Esophagus muscularis mucosa (tissue), 4 donors: ENCODE measurements at regions of chrX and their contacts with region 1.

Region 1: DNA sequence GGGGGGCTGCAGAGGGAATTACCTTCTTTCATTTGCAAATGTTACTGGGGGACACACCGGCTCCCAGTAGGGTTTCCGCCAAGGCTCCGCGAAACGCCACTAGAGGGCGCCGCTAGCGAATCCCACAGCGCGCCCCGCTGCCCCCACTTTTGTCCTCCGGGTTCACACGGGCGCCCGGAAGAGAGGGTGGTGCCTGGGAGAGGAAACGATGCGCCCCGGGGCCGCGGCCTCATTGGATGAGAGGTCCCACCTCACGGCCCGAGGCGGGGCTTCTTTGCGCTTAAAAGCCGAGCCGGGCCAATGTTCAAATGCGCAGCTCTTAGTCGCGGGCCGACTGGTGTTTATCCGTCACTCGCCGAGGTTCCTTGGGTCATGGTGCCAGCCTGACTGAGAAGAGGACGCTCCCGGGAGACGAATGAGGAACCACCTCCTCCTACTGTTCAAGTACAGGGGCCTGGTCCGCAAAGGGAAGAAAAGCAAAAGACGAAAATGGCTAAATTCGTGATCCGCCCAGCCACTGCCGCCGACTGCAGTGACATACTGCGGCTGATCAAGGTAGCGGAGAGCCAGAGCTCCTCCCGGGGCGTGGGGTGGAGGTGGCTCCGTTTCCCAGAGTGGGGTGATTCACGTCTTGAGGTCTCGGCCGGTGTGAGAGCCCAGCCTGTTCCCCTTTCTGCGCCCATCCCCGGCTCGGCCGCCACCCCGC is at the start of gene SAT1:
- DNase-seq: peak; percentile 97
- H3K4me3 ChIP-seq: peak within 1 kb of the TSS; percentile 64 to 78 (median 68)
- H3K27ac ChIP-seq: peak within 1 kb of the TSS; percentile 89 to 96 (median 94)
- H3K4me1 ChIP-seq: peaks cover 0 to 30% (median 10%) of the 10 kb centered on the region in 4 donors
- H3K27me3 ChIP-seq: no peaks in the 10 kb centered on the region
- CTCF ChIP-seq: peak; percentile 76 to 77 (median 77)
- EP300 ChIP-seq: no peak
- POLR2A ChIP-seq: peak; percentile 96
- total RNA-seq, gene SAT1: 152 to 621 (median 206) TPM

Region 2: GRCh38 chrX:23694606-23695005 is 88.4 kb before region 1 on chrX:
- intact Hi-C with region 1: loop called (anchors 10 kb)
- DNase-seq: no peak
- H3K4me3 ChIP-seq: no peak overlapping the region
- H3K27ac ChIP-seq: no peak overlapping the region
- H3K4me1 ChIP-seq: no peaks in the 10 kb centered on the region
- H3K27me3 ChIP-seq: no peaks in the 10 kb centered on the region
- CTCF ChIP-seq: peak; percentile 21 to 53 (median 48)
- EP300 ChIP-seq: no peak
- POLR2A ChIP-seq: no peak

Region 3: DNA sequence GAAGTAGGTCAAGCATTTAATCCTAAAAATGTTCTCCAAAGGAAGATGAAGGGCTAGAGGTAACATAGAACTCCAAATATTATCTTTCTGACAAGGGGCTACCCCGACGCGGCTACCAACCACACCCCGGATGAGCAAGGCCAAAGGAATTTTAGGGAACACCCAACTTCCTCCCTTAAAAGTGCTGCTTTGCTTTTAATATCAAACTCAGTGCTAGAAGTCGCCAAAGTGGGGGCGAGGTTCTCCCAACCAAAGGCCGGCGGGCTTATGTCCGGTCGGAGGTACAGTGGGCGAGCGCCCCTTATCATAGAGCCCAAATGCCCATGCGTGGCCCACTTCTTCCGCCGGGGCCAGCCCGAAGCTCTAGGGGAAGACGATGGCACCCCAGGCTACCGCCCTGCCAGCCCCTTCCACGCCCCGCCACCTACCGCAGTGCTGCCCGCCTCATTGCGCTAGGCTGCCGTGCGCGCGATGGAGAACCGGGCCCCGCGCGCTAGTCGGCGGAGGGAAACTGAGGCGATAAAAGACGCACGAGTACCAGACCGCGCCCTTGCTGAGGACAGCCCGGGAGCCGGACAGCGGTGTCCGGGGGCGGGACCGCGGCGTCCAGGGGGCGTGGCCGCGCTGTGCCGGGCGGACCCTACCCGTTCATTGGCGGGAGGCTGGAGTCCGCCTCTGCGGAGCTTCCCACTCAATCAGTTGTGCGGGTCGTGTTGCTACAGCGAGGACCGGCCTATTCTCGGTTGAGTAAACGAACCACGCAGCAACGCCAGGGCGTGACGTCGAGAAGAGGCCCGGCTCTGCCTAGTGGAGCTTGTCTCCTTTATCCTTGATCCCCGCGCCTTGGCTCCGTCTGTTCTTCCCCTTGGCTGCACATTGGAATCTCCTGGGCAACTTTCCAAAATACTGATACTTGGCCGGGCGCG is 40.1 kb before region 1 on chrX and contains the start of gene ACOT9:
- intact Hi-C with region 1: loop called (anchors 5 kb)
- DNase-seq: peak; percentile 96
- H3K4me3 ChIP-seq: peak within 1 kb of the TSS; percentile 71 to 83 (median 76)
- H3K27ac ChIP-seq: peak within 1 kb of the TSS; percentile 92 to 98 (median 96)
- H3K4me1 ChIP-seq: peaks cover 0 to 21% (median 12%) of the 10 kb centered on the region in 4 donors
- H3K27me3 ChIP-seq: no peaks in the 10 kb centered on the region
- CTCF ChIP-seq: no peak
- EP300 ChIP-seq: no peak
- POLR2A ChIP-seq: peak; percentile 63
- total RNA-seq, gene ACOT9: 46.3 to 63.8 (median 52.3) TPM

Region 4: DNA sequence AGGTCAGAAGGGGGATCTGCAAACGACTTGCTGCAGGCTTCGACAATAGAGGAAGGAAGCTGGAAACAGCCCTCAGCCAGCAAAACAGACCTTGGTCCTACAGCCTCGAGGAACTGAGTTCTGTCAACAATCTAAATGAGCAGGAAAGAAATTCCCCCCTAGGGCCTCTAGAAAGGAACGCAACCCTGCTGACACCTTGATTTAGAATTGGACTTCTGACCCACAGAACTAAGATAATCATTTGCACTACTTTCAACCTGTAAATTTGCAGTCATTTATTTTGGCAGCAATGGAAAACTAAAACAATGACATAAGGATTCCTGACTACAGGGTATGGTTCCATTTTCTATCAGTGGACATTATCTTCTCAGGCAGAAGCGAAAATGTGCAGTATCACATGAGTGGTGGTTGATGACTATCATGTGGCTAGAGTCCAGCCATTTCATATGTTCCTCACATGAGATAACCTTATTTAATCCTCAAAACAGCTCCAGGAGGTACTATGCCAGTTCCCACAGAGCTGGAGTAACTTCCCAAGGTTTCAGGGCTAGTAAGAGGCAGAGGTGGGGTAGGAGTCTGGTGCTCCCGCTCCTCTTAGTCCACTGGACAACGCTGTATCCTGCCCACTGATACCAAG is 61.6 kb after region 1 on chrX:
- intact Hi-C with region 1: no loop called
- DNase-seq: no peak
- H3K4me3 ChIP-seq: no peak overlapping the region
- H3K27ac ChIP-seq: peak overlapping the region in 2 of 4 donors; percentile 22 to 34
- H3K4me1 ChIP-seq: peaks cover 0 to 3% (median 2%) of the 10 kb centered on the region in 4 donors
- H3K27me3 ChIP-seq: no peaks in the 10 kb centered on the region
- CTCF ChIP-seq: no peak
- EP300 ChIP-seq: no peak
- POLR2A ChIP-seq: no peak

Region 5: DNA sequence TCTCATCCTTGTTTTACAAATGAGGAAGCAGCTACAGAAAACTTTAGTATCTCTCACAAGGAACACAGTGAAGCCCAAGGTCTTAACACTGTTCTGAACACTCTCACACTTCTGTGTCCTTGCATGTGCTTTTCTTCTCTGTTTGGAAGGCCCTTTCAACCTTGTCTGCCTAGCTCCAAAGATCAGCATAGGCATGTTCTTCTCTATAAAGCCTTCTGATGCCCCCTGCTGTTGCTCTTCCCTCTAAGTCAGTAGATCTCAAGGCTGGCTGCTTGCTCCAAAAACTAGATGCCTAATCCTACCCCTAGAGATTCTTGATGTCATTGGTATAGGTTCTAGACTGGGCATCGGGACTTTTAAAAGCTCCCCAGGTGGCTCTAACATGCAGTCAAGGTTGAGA is 118.8 kb after region 1 on chrX:
- intact Hi-C with region 1: loop called (anchors 2 kb)
- DNase-seq: no peak
- H3K4me3 ChIP-seq: peak overlapping the region in 2 of 4 donors; percentile 17 to 22
- H3K27ac ChIP-seq: peak overlapping the region; percentile 55 to 76 (median 66)
- H3K4me1 ChIP-seq: peaks cover 13 to 46% (median 32%) of the 10 kb centered on the region in 4 donors
- H3K27me3 ChIP-seq: no peaks in the 10 kb centered on the region
- CTCF ChIP-seq: peak; percentile 32 to 52 (median 51)
- EP300 ChIP-seq: no peak
- POLR2A ChIP-seq: no peak

Region 6: DNA sequence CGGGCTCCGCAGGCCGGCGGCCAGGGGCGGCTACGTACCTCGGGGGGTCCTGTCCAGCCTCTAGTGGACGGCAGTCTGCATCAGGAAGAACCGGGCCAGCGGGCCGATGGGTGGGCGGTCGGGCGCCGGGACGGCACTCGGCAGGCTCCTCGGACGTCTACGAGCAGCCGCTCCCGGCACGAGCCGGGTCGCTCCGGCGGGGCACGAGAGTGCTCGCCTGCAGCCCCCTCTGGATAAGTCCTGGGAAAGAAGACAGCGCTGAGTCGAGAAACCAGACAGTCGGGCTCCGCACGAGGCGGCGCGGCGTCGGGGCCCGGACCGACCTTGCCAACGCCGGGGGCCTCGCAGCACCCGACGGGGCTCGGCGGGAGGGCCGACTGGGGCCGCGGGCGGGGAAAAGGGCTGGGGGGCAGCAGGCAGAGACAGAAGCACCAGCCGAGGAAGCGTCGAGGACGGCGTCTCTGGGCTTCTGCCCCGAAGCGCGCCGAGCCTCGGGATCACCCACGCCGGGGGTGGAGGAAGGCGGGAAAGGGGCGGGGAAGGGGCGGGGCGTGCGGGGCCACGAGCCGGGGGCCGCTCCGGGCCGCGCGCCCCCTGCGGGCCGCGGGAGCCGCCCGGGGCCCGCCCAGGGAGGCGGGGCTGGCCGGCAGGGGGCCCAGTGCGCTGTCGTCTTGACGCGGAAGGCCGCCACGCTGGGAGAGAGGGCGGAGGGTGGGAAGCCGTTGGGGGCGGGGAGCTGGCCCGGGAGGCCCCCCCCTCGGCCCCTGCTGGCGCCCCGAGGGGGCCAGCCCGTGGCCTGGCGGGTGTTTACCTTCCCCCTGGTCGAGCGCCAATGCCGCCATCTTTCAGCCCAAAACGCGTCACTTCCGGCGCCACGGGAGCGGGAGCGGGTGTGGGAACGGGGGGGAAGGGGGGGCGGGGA is 242.1 kb after region 1 on chrX:
- intact Hi-C with region 1: loop called (anchors 10 kb)
- DNase-seq: peak; percentile 93
- H3K4me3 ChIP-seq: peak overlapping the region; percentile 73 to 84 (median 78)
- H3K27ac ChIP-seq: peak overlapping the region; percentile 90 to 97 (median 96)
- H3K4me1 ChIP-seq: peaks cover 0 to 24% (median 7%) of the 10 kb centered on the region in 4 donors
- H3K27me3 ChIP-seq: no peaks in the 10 kb centered on the region
- CTCF ChIP-seq: peak in 1 of 3 experiments; percentile 22
- EP300 ChIP-seq: no peak
- POLR2A ChIP-seq: peak; percentile 82